MCF 10A (cell line): ENCODE measurements at regions of chr17 and their contacts with region 1.

Region 1: DNA sequence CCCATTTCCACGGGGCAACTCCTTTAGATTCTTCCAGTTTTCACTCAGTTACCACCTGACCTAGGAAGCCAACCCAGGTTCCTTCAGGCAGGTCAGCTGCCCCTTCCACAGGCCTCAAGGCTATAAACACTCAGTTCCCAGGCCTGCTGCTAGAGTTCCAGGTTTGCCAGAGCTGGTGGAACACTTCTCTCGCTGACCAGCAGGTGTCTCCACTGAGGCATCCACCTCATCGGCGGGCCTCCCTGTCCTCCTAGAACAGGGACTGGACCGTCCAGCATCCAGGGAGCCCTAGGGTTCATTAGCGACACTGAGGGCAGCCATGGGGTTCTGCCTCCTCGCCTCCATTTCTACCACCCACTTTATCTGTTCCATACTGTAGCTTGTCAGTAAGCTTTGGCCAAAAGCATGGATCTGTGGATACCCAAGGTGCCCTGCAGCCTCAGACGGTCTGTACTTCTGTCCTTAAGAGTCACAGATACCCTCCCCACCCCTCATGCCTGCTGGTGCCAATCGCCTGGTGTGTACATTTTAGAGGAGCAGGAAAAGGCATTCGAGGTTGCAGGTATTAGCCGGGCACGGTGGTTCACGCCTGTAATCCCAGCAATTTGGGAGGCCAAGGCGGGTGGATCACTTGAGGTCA is 29.0 kb downstream of the PIMREG start:
- DNase-seq: peak; percentile 77
- H3K4me3 Mint-ChIP-seq: peak overlapping the region; percentile 15
- H3K27ac Mint-ChIP-seq: no peak overlapping the region
- H3K4me1 Mint-ChIP-seq: peaks cover 19% of the 10 kb centered on the region
- H3K27me3 Mint-ChIP-seq: no peaks in the 10 kb centered on the region
- CTCF ChIP-seq: peak; percentile 88

Region 2: GRCh38 chr17:6374761-6375312 is 98.4 kb before region 1 on chr17:
- CTCF ChIA-PET with region 1: no interaction called
- POLR2A ChIA-PET with region 1: no interaction called
- intact Hi-C with region 1: no loop called
- DNase-seq: peak; percentile 63
- H3K4me3 Mint-ChIP-seq: no peak overlapping the region
- H3K27ac Mint-ChIP-seq: no peak overlapping the region
- H3K4me1 Mint-ChIP-seq: peaks cover 13% of the 10 kb centered on the region
- H3K27me3 Mint-ChIP-seq: peaks cover 11% of the 10 kb centered on the region
- CTCF ChIP-seq: no peak

Region 3: GRCh38 chr17:6487251-6488007 is 14.2 kb after region 1 on chr17:
- CTCF ChIA-PET with region 1: interaction called, 18 read pairs
- POLR2A ChIA-PET with region 1: interaction called, 3 read pairs
- intact Hi-C with region 1: no loop called
- DNase-seq: no peak
- H3K4me3 Mint-ChIP-seq: no peak overlapping the region
- H3K27ac Mint-ChIP-seq: no peak overlapping the region
- H3K4me1 Mint-ChIP-seq: no peaks in the 10 kb centered on the region
- H3K27me3 Mint-ChIP-seq: no peaks in the 10 kb centered on the region
- CTCF ChIP-seq: no peak

Region 4: GRCh38 chr17:6523330-6523729 is 50.1 kb after region 1 on chr17:
- CTCF ChIA-PET with region 1: interaction called, 4 read pairs
- POLR2A ChIA-PET with region 1: no interaction called
- intact Hi-C with region 1: loop called (anchors 1 kb)
- DNase-seq: peak; percentile 71
- H3K4me3 Mint-ChIP-seq: peak overlapping the region; percentile 26
- H3K27ac Mint-ChIP-seq: peak overlapping the region; percentile 77
- H3K4me1 Mint-ChIP-seq: peaks cover 33% of the 10 kb centered on the region
- H3K27me3 Mint-ChIP-seq: no peaks in the 10 kb centered on the region
- CTCF ChIP-seq: no peak

Region 5: DNA sequence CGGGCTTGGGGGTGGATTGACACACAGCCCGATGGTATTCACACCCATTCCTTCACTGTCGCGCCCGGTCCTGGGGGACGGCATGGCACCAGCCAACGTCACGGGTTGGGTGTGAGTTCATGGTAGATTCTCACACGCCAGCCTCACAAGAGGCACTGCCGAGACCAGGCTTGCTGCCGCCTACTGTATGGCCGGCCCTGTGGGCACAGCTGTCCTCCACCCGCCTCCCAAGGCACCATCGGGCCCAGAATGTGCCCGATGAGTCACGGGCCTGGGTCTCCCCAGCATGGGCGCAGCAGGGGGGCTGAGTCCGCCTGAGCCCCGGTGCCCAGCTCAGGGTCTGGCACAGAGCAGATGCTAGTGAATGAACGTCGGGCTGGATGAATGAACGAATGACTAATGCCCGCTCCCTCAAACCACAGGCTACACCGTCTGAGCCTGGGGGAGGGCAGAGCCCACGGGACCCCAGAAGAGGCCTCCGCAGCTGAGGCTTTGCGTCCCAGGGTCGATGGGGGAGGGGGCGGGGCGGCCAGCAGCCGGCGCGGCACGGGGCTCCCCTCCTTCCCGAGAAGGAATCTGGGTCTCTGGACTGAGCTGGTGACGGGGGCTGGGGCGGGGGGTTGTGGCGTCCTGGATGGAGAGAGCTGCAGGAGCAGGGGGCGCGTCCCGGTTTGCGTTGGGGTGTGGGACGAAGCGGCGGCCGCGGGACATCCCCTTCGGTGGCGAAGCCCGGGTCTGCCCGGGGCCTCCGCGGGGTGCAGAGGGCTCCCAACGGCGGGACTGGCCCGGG is 82.3 kb after region 1 on chr17:
- CTCF ChIA-PET with region 1: interaction called, 30 read pairs
- POLR2A ChIA-PET with region 1: interaction called, 19 read pairs
- intact Hi-C with region 1: loop called (anchors 1 kb)
- DNase-seq: peak; percentile 79
- H3K4me3 Mint-ChIP-seq: peak overlapping the region; percentile 80
- H3K27ac Mint-ChIP-seq: peak overlapping the region; percentile 79
- H3K4me1 Mint-ChIP-seq: peaks cover 45% of the 10 kb centered on the region
- H3K27me3 Mint-ChIP-seq: no peaks in the 10 kb centered on the region
- CTCF ChIP-seq: no peak

Region 6: DNA sequence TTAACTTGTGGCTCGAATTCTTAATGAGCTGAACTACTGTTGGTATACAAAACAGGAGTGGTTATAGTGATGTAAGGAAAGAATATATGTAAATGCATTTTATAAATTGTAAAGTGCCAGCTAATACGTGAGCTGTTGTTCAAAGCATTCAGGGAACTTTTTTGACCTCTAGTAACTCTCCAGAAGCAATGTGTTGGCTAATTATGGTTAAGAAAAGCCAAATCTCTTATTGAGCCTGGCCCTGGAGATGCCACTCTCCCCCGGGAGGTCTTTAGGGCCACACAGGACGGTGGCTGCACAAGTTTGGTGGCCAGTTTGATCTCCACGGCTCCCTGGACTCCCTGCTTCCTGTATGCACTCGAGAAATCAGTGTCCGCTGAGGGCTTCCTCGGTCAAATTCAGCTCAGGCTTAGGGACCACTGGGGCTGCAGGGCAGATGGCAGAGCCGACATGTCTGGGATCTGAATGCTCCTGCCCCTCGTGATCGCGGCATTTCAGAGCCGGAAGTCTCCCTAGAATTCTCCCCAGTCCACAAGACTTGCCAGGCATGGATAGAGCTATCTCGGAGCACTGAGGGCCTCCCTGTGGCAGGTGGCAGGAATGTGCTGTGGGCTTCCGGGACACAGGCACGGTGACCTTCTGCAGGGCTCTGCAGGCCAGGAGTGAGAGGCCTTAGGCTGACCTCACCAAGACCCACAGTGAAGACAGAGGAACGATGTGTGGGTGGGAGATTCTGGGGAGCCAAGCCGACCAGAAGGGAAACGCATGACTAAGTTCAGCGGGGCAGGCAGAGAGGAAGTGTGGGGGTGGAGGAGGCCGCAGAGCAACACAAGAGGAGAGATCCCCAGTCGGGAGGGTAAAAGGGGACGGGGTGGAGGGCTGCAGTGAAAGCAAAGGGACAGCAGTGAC is 101.7 kb after region 1 on chr17:
- CTCF ChIA-PET with region 1: interaction called, 15 read pairs
- POLR2A ChIA-PET with region 1: interaction called, 4 read pairs
- intact Hi-C with region 1: loop called (anchors 5 kb)
- DNase-seq: peak; percentile 73
- H3K4me3 Mint-ChIP-seq: no peak overlapping the region
- H3K27ac Mint-ChIP-seq: peak overlapping the region; percentile 78
- H3K4me1 Mint-ChIP-seq: peaks cover 28% of the 10 kb centered on the region
- H3K27me3 Mint-ChIP-seq: no peaks in the 10 kb centered on the region
- CTCF ChIP-seq: no peak

Region 7: DNA sequence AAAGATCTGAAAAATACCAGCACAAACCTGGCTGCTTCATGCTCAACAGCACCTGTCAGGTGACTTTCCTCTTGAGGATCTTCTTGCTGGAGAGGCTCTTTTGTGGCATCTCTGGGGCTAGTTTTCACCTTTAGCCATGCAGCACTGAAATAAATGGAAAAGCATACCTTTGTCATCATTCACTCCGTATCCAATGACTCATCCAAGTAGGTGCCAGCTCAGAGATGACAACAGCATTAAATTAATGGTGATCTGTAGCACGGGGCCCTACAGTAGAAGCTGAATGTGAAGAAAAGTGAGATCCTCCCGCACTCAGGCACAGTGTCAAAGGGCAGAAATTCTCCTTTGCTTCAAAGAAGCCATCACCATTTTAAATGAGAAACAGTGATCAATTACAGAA is 135.1 kb after region 1 on chr17:
- CTCF ChIA-PET with region 1: interaction called, 24 read pairs
- POLR2A ChIA-PET with region 1: interaction called, 6 read pairs
- intact Hi-C with region 1: no loop called
- DNase-seq: peak; percentile 63
- H3K4me3 Mint-ChIP-seq: no peak overlapping the region
- H3K27ac Mint-ChIP-seq: no peak overlapping the region
- H3K4me1 Mint-ChIP-seq: peaks cover 11% of the 10 kb centered on the region
- H3K27me3 Mint-ChIP-seq: no peaks in the 10 kb centered on the region
- CTCF ChIP-seq: no peak

Region 8: GRCh38 chr17:6651357-6651918 is 178.2 kb after region 1 on chr17 and contains the starts of genes C17orf100 and MED31:
- CTCF ChIA-PET with region 1: interaction called, 15 read pairs
- POLR2A ChIA-PET with region 1: interaction called, 9 read pairs
- intact Hi-C with region 1: loop called (anchors 2 kb)
- DNase-seq: peak; percentile 91
- H3K4me3 Mint-ChIP-seq: peak within 1 kb of the TSS; percentile 87
- H3K27ac Mint-ChIP-seq: peak within 1 kb of the TSS; percentile 94
- H3K4me1 Mint-ChIP-seq: peaks cover 40% of the 10 kb centered on the region
- H3K27me3 Mint-ChIP-seq: peaks cover 6% of the 10 kb centered on the region
- CTCF ChIP-seq: no peak
- total RNA-seq, gene C17orf100: 1.4 and 1.7 TPM in 2 replicates
- total RNA-seq, gene MED31: 17.7 and 17.8 TPM in 2 replicates